Naive thymus-derived CD8-positive, alpha-beta T cell (primary cell): ENCODE measurements at regions of chr2 and their contacts with region 1.

Region 1: GRCh38 chr2:234496835-234497591 is at the start of gene ARL4C:
- DNase-seq: peak; percentile 60 to 82 (median 72)
- ATAC-seq: peak; percentile 36 to 45
- H3K4me3 Mint-ChIP-seq: peak within 1 kb of the TSS; percentile 88 to 100 (median 98)
- H3K27ac Mint-ChIP-seq: peak within 1 kb of the TSS; percentile 96 to 99 (median 98)
- H3K4me1 Mint-ChIP-seq: peaks cover 36 to 50% (median 43%) of the 10 kb centered on the region in 4 donors
- H3K27me3 Mint-ChIP-seq: peaks cover 0 to 1% (median 0%) of the 10 kb centered on the region in 5 donors
- polyA plus RNA-seq, gene ARL4C: 52.9 to 140 (median 112) TPM

Region 2: DNA sequence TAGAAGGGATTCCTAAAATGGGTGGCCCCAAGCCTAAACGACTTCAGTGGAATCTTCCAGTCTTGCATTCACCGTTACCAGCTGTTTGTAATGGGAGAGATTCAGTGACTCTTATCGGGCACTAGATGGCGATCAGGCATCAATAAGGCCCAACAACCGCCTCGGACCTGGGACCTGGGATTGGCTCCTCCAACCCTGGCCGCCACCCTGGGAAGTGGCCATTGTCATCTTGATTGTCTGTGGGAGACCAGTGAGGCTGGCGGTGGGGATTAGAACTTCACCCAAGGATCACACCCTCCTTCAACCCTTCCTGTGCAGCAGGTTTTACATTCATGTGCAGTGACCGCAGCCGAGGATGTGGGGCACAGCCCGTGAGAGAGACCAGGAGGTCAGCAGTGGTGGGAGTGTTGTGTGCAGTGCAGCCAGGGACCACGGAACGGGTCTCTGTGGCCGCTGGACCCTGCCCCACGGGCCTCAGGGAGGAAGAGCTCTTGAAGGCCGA is 361.2 kb before region 1 on chr2:
- POLR2A ChIA-PET with region 1: interaction called, 43 read pairs
- DNase-seq: peak; percentile 6 to 71 (median 36)
- ATAC-seq: peak; percentile 68 to 73
- H3K4me3 Mint-ChIP-seq: peak overlapping the region in 1 of 10 donors; percentile 32
- H3K27ac Mint-ChIP-seq: peak overlapping the region in 8 of 10 donors; percentile 22 to 88 (median 52)
- H3K4me1 Mint-ChIP-seq: peaks cover 22 to 30% (median 29%) of the 10 kb centered on the region in 4 donors
- H3K27me3 Mint-ChIP-seq: peaks cover 0 to 6% (median 0%) of the 10 kb centered on the region in 5 donors

Region 3: DNA sequence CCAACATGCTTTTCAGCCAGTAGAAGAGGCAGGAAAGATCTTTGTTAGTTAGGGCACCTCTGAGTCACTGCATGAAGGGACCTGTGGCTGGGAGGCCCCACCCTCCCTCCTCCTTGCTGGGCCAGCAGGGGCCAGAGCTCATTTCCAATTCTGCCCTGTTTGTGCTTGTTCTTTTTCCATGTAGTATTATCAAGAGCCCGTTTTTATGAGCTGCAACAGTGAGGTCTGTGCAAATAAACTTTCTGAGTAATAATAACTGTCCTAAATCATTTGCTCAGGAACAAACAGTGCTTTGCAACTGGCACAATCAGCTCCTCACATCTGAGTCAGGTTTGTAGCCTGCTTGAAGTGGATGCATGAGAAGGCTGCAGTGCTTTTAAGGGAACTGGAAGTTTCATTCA is 128.2 kb before region 1 on chr2:
- POLR2A ChIA-PET with region 1: interaction called, 17 read pairs
- DNase-seq: peak in 7 of 10 donors; percentile 4 to 38 (median 27)
- ATAC-seq: peak; percentile 55 to 80
- H3K4me3 Mint-ChIP-seq: peak overlapping the region in 9 of 10 donors; percentile 24 to 81 (median 54)
- H3K27ac Mint-ChIP-seq: peak overlapping the region; percentile 59 to 96 (median 86)
- H3K4me1 Mint-ChIP-seq: peaks cover 37 to 77% (median 73%) of the 10 kb centered on the region in 4 donors
- H3K27me3 Mint-ChIP-seq: no peaks in the 10 kb centered on the region

Region 4: DNA sequence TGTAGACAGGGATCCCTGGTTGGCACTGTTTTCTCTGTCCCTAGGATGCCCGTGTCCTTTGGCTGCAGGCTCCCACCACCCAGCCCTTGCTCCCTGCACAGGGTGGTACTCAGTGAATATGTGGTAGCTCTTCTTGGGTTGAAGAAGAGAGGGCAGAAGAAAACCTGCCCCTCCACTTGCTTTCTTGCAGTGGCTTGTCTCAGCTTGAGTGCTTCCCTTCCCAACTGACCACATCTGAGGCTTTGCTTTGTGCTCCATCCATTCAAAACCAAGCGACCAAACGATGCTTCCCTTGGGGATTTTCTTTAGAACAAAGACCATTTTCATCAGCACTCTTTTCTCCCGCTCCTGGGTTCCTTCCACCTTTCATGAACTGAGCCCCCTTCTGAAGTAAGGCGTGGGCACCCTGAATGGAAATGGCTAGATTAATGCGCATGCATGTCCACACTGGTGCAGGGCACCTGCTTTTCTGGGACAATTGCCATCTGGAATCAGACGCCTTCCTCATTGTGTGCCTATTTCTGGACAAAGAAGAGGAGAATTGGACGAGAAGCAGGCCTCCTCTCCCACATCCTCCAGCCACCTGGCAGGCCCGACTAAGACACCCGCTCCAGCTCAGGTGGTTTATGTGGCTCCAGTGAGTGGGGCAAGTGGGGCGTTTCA is 59.2 kb before region 1 on chr2:
- POLR2A ChIA-PET with region 1: interaction called, 11 read pairs
- DNase-seq: peak in 1 of 10 donors; percentile 12
- ATAC-seq: peak in 1 of 2 donors; percentile 12
- H3K4me3 Mint-ChIP-seq: peak overlapping the region in 9 of 10 donors; percentile 13 to 82 (median 72)
- H3K27ac Mint-ChIP-seq: peak overlapping the region; percentile 84 to 96 (median 91)
- H3K4me1 Mint-ChIP-seq: peaks cover 44 to 91% (median 82%) of the 10 kb centered on the region in 4 donors
- H3K27me3 Mint-ChIP-seq: no peaks in the 10 kb centered on the region

Region 5: GRCh38 chr2:234463626-234464290 is 33.3 kb before region 1 on chr2:
- POLR2A ChIA-PET with region 1: interaction called, 40 read pairs
- DNase-seq: peak; percentile 31 to 86 (median 78)
- ATAC-seq: peak; percentile 86 to 93
- H3K4me3 Mint-ChIP-seq: peak overlapping the region; percentile 58 to 89 (median 84)
- H3K27ac Mint-ChIP-seq: peak overlapping the region; percentile 90 to 99 (median 96)
- H3K4me1 Mint-ChIP-seq: peaks cover 39 to 72% (median 67%) of the 10 kb centered on the region in 4 donors
- H3K27me3 Mint-ChIP-seq: no peaks in the 10 kb centered on the region